Activated CD4-positive, alpha-beta T cell treated with anti-CD3 and anti-CD28 coated beads for 36 hours (primary cell): ENCODE measurements at regions of chr22 and their contacts with region 1.

Region 1: DNA sequence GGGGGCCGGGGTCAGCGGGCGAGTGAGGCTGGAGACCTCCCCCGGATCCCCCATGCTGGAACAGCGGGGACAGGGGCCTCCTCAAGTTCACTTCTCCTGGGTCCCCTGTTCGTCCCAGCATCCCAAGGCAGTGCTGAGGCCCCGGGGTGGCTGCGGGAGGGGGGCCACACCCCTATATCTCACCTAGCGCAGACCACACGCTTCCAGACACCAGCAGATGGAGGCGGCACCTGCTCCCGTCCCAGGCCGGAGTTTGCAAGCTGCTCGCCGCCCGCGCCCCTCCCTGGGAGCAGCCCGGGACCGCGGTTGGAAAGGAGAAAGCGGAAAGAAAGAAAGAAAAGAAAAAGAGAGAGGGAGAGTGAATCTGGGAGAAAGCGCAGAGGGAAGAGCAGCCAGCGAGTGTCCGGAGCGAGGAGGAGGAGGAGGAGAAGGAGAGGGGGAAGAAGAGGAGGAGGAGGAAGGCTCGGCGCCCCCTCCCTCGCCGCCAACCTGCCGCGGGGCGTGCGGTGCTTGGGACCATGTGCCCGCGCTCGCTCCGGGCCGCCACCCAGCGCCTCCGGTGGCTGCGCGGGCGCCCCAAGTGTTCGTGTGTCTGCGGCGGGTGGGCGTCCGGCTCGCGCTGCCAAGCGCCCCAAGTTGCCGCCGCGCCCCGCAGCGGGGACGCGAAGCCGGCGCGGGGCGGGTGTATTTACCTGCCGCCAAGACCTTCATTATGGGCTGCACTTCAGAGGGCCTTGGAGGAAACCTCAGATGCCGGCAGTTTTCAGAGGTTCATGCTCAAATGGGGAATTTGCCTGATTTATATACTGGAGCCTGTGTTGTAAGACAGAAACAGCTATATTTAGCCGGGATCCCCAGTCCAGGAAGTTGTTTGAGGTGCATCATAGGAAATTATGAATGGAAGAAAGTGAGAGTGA is at the start of gene LIF:
- DNase-seq: peak; percentile 81
- ATAC-seq: peak; percentile 65
- H3K4me3 Mint-ChIP-seq: peak within 1 kb of the TSS; percentile 99
- H3K27ac Mint-ChIP-seq: peak within 1 kb of the TSS; percentile 97
- H3K4me1 Mint-ChIP-seq: peaks cover 59% of the 10 kb centered on the region
- H3K27me3 Mint-ChIP-seq: no peaks in the 10 kb centered on the region
- total RNA-seq, gene LIF: 77.3 to 105 TPM

Region 2: DNA sequence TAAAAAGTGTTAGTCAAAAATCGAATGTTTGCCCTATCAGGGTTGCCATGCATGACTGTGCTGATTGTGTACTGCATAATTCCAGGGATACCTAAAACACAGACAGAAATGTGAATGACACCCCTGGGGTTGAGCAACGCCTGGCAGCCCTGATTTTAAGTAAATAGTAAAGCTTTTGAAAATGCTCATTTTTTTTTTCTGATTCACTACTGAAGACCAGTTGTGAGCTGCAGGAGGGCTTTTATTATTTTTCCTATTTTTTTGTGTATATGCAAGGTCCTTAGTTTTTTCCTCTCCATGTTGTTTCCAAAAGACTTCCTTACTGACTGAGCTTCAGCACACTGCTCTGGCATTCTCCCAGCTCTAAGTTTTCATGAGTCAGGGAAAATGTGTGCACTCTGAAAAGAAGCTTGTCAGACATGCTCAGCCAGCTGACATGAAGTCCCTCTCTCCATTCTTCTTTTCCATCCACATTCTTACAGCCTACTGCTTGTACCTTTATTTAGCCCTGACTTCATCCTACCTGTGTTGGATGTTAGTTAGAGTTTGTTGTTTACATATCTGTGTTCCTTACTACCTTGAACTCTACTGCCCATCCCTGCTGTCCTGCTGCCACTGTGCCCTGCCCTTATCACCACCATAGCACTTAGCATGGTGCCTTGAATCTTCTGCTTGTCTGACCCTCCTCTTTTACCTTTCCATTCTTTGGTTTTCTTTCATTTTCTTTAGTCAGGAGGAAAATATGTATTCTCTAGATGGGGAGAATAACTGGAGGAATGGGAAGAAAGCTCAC is 86.5 kb before region 1 on chr22:
- CTCF ChIA-PET with region 1: no interaction called
- POLR2A ChIA-PET with region 1: no interaction called
- intact Hi-C with region 1: loop called in 1 of 2 experiments (anchors 2 kb)
- DNase-seq: peak; percentile 18
- ATAC-seq: peak; percentile 39
- H3K4me3 Mint-ChIP-seq: no peak overlapping the region
- H3K27ac Mint-ChIP-seq: peak overlapping the region; percentile 81
- H3K4me1 Mint-ChIP-seq: peaks cover 48% of the 10 kb centered on the region
- H3K27me3 Mint-ChIP-seq: peaks cover 4% of the 10 kb centered on the region

Region 3: GRCh38 chr22:30169002-30169401 is 77.2 kb before region 1 on chr22:
- CTCF ChIA-PET with region 1: no interaction called
- POLR2A ChIA-PET with region 1: no interaction called
- intact Hi-C with region 1: loop called in 1 of 2 experiments (anchors 1 kb)
- DNase-seq: no peak
- ATAC-seq: peak; percentile 47
- H3K4me3 Mint-ChIP-seq: no peak overlapping the region
- H3K27ac Mint-ChIP-seq: no peak overlapping the region
- H3K4me1 Mint-ChIP-seq: no peaks in the 10 kb centered on the region
- H3K27me3 Mint-ChIP-seq: no peaks in the 10 kb centered on the region

Region 4: DNA sequence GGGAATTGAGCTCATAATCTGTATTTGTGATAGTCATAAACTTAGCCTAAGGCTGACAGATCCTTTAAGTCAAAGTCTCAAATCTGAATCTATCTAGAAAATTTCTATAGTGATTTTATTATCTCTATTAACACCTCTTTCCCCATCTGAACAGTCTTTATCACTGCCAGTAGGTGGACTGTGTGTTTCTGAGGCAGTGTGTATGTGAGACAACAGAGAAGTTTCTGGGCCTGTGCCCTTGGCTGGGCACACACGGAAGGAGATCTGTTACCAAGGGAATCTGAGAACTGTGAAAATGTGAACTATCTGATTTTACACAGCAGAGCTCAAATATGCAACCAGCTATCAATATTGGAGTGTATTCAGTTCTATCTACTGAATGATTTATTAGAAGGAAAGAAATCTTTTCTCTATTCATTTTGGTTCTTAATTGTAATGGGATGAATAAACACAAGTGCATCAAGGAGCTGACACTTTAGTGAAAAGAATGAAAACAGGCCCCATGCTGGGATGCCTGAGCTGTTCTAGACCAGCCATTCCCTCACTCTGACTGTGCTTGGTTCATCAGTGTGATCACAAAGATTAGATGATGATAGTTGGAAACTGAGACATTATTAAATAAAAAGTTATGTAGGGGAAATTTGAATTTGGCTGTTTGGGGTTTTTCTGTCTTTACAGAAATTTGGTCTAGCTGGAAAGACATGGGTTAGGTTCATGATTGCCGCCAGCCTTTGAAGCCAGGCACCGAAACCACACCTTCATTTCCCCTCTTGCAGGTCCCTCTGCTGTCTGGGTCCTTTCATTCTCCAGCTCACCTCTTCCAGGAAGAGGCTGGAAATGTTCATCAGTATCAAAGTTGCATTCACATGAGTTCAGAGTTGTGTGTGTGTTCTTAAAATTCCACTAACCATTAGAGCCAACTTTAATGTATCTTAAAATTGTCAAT is 67.8 kb before region 1 on chr22:
- CTCF ChIA-PET with region 1: no interaction called
- POLR2A ChIA-PET with region 1: no interaction called
- intact Hi-C with region 1: loop called in 1 of 2 experiments (anchors 1 kb)
- DNase-seq: peak; percentile 73
- ATAC-seq: peak; percentile 88
- H3K4me3 Mint-ChIP-seq: peak overlapping the region; percentile 18
- H3K27ac Mint-ChIP-seq: peak overlapping the region; percentile 83
- H3K4me1 Mint-ChIP-seq: peaks cover 69% of the 10 kb centered on the region
- H3K27me3 Mint-ChIP-seq: no peaks in the 10 kb centered on the region

Region 5: DNA sequence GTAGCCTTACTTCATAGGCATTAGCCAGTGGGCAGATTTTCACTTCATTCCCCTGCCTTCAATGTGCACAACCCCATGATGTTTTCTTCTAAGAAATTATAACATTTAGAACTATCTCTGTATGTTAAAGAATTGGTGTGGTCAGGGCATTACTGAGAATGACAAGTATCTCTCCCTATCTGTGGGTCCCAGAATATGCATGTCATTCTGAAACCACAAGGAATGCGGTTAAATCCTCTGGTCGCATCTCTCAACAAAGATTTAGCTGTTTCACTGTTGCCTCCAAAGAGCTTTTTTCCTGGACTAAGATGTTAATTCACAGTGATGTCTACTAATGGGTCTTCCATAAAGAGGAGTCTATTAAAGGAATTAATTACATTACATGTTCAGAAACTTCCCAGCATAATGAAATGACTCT is 62.4 kb before region 1 on chr22:
- CTCF ChIA-PET with region 1: no interaction called
- POLR2A ChIA-PET with region 1: interaction called, 6 read pairs
- intact Hi-C with region 1: loop called in 1 of 2 experiments (anchors 2 kb)
- DNase-seq: no peak
- ATAC-seq: peak; percentile 57
- H3K4me3 Mint-ChIP-seq: peak overlapping the region; percentile 8
- H3K27ac Mint-ChIP-seq: peak overlapping the region; percentile 84
- H3K4me1 Mint-ChIP-seq: peaks cover 89% of the 10 kb centered on the region
- H3K27me3 Mint-ChIP-seq: no peaks in the 10 kb centered on the region

Region 6: DNA sequence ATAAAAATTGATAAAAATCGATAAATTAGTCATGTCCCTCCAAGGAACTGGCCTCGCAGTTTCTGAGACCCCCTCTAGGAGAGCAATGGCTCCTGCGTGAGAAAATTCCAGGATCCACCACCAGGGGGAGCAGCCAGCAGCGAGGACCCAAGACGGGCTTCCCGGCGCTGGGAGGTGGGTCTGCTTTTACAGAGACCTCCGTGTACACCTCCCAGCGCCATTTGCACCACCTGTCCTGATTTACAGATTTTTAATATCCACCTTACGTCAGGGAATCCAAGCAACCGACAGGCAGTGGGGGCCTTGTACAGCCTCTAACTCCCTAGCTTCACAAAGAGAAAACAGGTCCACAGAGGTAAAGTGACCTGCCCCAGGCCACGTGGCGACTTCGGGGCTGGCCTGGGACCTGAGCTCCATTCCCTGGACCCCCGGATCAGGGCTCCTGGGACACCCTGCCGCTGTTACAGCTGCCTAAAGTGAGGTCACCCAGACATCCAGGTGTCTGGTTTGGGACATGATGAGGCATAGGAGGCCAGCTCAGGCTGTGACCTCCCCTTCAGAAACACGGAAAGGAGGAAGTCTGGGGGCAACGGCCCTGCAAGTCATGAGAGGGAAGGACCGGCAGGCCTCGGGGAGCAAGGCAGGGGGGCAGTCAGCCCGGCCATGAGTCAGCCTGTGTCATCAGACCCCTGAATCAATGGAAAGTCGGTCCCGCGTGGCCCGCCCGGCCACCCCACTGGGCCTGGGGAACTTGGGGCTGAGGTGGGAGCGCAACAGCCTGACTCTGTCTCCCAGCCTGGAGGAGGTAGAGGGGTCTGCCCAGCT is 16.9 kb after region 1 on chr22:
- CTCF ChIA-PET with region 1: interaction called, 5 read pairs
- POLR2A ChIA-PET with region 1: no interaction called
- intact Hi-C with region 1: loop called in 1 of 2 experiments (anchors 1 kb)
- DNase-seq: peak; percentile 88
- ATAC-seq: no peak
- H3K4me3 Mint-ChIP-seq: peak overlapping the region; percentile 62
- H3K27ac Mint-ChIP-seq: peak overlapping the region; percentile 51
- H3K4me1 Mint-ChIP-seq: peaks cover 33% of the 10 kb centered on the region
- H3K27me3 Mint-ChIP-seq: no peaks in the 10 kb centered on the region